Heart right ventricle (tissue), 16 donors: ENCODE measurements at regions of chr13 and their contacts with region 1.

Region 1: GRCh38 chr13:28710161-28710560 is 8.6 kb downstream of the SLC46A3 start:
- DNase-seq: no peak
- ATAC-seq: no peak
- H3K4me3 ChIP-seq: no peak overlapping the region
- H3K27ac ChIP-seq: no peak overlapping the region
- H3K4me1 ChIP-seq: peaks cover 0 to 25% (median 4%) of the 10 kb centered on the region in 9 donors
- H3K27me3 ChIP-seq: no peaks in the 10 kb centered on the region
- CTCF ChIP-seq: no peak

Region 2: GRCh38 chr13:28671126-28671792 is 38.9 kb before region 1 on chr13:
- intact Hi-C with region 1: loop called in 2 of 10 experiments (anchors 5 to 10 kb)
- DNase-seq: no peak
- ATAC-seq: no peak
- H3K4me3 ChIP-seq: no peak overlapping the region
- H3K27ac ChIP-seq: peak overlapping the region in 1 of 10 donors; percentile 67
- H3K4me1 ChIP-seq: peaks cover 0 to 37% (median 7%) of the 10 kb centered on the region in 9 donors
- H3K27me3 ChIP-seq: no peaks in the 10 kb centered on the region
- CTCF ChIP-seq: no peak